Activated naive CD4-positive, alpha-beta T cell treated with anti-CD3 and anti-CD28 coated beads for 36 hours (primary cell): ENCODE measurements at regions of chr1 and their contacts with region 1.

Region 1: DNA sequence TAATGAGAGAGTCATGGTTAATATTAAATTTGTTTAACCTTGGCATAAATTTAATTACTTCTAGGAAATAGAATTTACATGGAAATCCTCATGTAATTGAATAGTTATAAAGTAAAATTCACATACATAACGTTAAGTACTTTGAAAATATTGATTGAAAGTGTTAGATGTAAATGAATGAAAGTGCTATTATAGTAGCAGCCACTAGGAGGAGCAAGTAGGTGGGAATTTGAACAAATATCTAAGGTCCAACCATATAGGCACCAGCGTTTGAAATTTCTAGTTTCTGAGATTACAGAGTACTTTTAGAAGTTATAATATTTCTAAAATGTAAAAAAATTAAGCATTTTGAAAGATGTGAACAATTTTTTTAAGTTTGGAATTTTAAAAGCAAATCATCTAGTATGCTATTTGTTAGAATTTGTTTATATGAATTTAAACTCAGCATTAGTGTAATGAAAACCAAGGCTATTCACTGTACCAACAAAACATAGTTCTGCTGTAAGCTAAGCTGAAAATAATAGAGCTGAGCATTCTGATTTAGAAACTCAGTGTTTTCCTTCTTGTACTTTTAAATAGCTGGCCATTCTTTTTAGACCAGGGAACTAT is 3.3 kb downstream of the B3GALT2 start:
- DNase-seq: no peak
- H3K4me3 Mint-ChIP-seq: no peak overlapping the region
- H3K27ac Mint-ChIP-seq: no peak overlapping the region
- H3K4me1 Mint-ChIP-seq: peaks cover 35% of the 10 kb centered on the region
- H3K27me3 Mint-ChIP-seq: no peaks in the 10 kb centered on the region

Region 2: DNA sequence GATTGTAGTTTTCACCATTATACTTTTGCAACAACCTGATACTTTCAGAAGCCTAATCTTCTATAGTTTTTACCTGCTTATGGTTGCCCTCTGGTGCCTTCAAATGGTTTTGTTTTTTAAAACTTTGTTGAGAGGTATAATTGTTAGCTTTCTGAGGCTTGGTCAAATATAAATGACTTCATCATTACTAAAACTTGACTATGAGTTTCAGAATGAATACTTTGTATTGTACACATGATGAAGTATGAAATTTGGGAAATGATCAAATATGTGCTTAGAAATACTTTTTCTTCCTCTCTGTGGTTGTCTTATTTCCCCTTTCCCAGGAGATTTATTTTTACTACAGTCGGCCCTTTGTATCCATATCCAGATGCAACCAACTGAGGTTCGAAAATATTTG is 155.1 kb after region 1 on chr1:
- CTCF ChIA-PET with region 1: interaction called, 4 read pairs
- intact Hi-C with region 1: loop called (anchors 1 kb)
- DNase-seq: no peak
- H3K4me3 Mint-ChIP-seq: no peak overlapping the region
- H3K27ac Mint-ChIP-seq: no peak overlapping the region
- H3K4me1 Mint-ChIP-seq: peaks cover 7% of the 10 kb centered on the region
- H3K27me3 Mint-ChIP-seq: no peaks in the 10 kb centered on the region

Region 3: GRCh38 chr1:193754732-193755427 is 571.8 kb after region 1 on chr1:
- CTCF ChIA-PET with region 1: interaction called, 3 read pairs
- intact Hi-C with region 1: loop called (anchors 5 kb)
- DNase-seq: no peak
- H3K4me3 Mint-ChIP-seq: no peak overlapping the region
- H3K27ac Mint-ChIP-seq: no peak overlapping the region
- H3K4me1 Mint-ChIP-seq: no peaks in the 10 kb centered on the region
- H3K27me3 Mint-ChIP-seq: no peaks in the 10 kb centered on the region

Region 4: DNA sequence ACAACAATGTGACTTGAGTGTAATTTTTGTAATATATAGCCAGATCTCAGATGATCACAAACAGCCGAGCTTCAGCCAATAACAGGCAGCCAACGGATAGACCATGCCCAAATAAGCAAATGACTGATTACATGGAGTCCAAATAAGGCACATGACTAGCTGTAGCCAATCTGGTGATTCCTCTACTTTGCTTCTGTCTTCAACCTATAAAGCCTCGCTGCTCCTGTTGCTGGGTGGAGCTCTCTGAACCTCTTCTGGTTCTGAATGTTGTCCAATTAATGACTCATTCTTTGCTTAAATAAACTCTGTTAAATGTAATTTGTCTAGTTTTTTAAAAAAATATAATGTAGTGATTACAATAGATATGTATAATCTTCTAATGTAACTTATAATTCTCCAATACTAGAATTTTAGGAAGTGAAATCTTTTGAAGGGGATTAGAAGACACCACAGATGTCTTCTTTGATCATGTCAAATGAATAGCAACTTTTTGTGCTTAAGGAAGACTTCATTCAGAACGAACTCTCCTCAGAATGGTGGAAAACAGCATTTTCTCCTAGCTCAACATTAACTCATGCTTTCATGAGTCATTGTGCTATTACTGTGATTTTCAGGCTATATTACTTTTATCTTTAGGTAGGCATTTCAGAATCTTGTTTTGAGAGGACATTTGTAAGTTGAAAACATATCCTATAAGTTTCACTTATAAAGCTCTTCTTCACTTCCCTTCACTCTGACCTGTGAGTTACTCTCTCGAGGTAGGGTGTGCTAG is 861.0 kb after region 1 on chr1:
- CTCF ChIA-PET with region 1: no interaction called
- intact Hi-C with region 1: loop called (anchors 10 kb)
- DNase-seq: no peak
- H3K4me3 Mint-ChIP-seq: no peak overlapping the region
- H3K27ac Mint-ChIP-seq: no peak overlapping the region
- H3K4me1 Mint-ChIP-seq: peaks cover 27% of the 10 kb centered on the region
- H3K27me3 Mint-ChIP-seq: no peaks in the 10 kb centered on the region